ENCODE measurements at regions of chr10 and their contacts with region 1.

Region 1: DNA sequence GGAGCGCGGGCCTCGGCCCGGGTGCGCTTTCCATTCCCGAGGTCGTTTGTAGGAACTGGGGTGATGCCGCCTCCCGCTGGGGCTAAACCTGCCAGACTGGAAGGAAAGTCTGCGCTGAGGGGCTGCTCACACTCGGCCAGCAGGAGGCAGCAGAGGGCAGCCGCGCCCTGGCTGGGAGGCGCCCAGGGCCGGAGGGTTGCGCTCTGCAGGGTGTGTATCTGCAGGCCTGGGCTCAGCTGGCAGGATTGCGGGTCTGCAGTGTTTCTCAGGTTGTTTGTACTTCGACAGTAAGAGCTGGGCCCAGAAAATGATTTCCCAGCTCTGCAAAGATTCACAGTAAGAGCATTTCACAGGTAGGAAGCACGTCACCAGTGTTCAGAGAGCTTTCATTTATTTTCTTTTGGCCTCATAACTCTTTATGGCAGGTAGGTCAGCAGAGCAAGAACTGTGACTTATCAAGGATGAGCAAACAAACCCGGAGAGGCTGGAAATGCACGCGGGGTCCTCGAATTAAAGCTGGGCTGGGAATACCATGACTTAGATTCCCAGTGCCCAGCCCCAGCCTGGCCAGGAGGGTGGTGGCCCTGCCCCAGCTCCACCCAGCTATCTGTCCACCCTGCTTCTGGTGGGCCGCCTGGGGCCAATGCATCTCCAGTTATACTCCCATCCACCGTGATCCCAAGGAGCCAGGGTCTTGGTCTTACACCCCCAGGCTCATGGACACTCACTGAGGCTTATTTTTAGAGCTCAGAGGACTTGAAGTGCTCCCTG is 15.2 kb upstream of the PPP2R2D start:
- DNase-seq: no peak
- H3K4me3 ChIP-seq: no peak overlapping the region
- H3K27ac ChIP-seq: no peak overlapping the region
- H3K4me1 ChIP-seq: peaks cover 0 to 13% (median 0%) of the 10 kb centered on the region in 3 donors
- H3K27me3 ChIP-seq: peaks cover 0 to 46% (median 0%) of the 10 kb centered on the region in 4 donors
- CTCF ChIP-seq: peak; percentile 92 to 98 (median 96)
- POLR2A ChIP-seq: no peak

Region 2: GRCh38 chr10:131049016-131049415 is 836.6 kb before region 1 on chr10:
- intact Hi-C with region 1: no loop called
- DNase-seq: no peak
- H3K4me3 ChIP-seq: no peak overlapping the region
- H3K27ac ChIP-seq: no peak overlapping the region
- H3K4me1 ChIP-seq: no peaks in the 10 kb centered on the region
- H3K27me3 ChIP-seq: peaks cover 0 to 52% (median 0%) of the 10 kb centered on the region in 4 donors
- CTCF ChIP-seq: no peak
- POLR2A ChIP-seq: no peak

Region 3: DNA sequence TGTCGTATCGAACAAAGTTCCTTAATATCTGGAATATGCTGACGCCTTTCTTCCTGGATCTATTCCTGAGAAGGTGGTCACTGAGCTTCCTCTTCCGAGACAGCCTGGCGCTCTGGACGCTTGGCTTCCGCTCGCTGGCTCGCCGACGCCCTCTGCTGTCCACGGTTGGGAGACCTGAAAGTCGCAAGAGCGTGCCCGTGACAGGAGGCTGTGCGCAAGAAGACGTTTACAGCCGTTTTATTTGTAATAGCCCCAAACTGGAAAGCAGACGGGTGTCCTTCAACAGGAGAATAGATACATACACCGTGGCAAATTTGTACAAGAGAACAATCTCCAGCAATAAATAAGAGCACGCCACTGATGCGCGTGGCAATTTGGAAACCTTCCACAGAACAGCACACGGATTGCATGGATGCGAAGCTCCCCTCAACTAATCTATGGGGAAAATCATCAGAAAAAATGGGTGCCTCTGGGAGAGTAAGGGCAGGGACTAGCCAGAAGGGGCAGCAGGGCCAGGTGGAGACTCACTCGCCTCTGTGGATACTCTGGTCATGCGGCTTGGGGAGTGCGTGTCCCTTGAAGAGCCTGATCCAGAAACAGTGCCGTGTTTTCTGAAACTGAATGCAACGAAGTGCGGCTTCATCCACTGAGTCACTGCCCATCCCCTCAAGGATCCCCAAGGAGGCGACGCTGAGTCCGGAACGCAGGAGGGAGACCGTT is 137.7 kb after region 1 on chr10:
- intact Hi-C with region 1: loop called (anchors 5 kb)
- DNase-seq: peak; percentile 4
- H3K4me3 ChIP-seq: peak overlapping the region in 3 of 4 donors; percentile 12 to 53 (median 23)
- H3K27ac ChIP-seq: no peak overlapping the region
- H3K4me1 ChIP-seq: peaks cover 0 to 12% (median 8%) of the 10 kb centered on the region in 3 donors
- H3K27me3 ChIP-seq: peaks cover 0 to 64% (median 0%) of the 10 kb centered on the region in 4 donors
- CTCF ChIP-seq: peak; percentile 59 to 92 (median 86)
- POLR2A ChIP-seq: no peak

Region 4: GRCh38 chr10:132142411-132143161 is 257.0 kb after region 1 on chr10:
- intact Hi-C with region 1: loop called (anchors 10 kb)
- DNase-seq: no peak
- H3K4me3 ChIP-seq: no peak overlapping the region
- H3K27ac ChIP-seq: no peak overlapping the region
- H3K4me1 ChIP-seq: peaks cover 0 to 6% (median 0%) of the 10 kb centered on the region in 3 donors
- H3K27me3 ChIP-seq: peaks cover 0 to 35% (median 0%) of the 10 kb centered on the region in 4 donors
- CTCF ChIP-seq: peak; percentile 62 to 84 (median 72)
- POLR2A ChIP-seq: no peak

Measured in esophagus squamous epithelium (tissue), 5 donors.